Naive thymus-derived CD4-positive, alpha-beta T cell (primary cell): ENCODE measurements at regions of chr13 and their contacts with region 1.

Region 1: GRCh38 chr13:21297914-21298831 is 121.7 kb downstream of the MRPL57 start:
- DNase-seq: peak; percentile 79 to 91 (median 85)
- ATAC-seq: peak; percentile 100
- H3K4me3 ChIP-seq: peak overlapping the region; percentile 90
- H3K4me3 Mint-ChIP-seq: peak overlapping the region; percentile 78 to 95 (median 86)
- H3K27ac ChIP-seq: peak overlapping the region; percentile 44
- H3K27ac Mint-ChIP-seq: peak overlapping the region; percentile 58 to 90 (median 72)
- H3K4me1 ChIP-seq: peaks cover 11 to 15% of the 10 kb centered on the region in 2 donors
- H3K4me1 Mint-ChIP-seq: peaks cover 11 to 25% (median 22%) of the 10 kb centered on the region in 7 donors
- H3K27me3 ChIP-seq: no peaks in the 10 kb centered on the region
- H3K27me3 Mint-ChIP-seq: no peaks in the 10 kb centered on the region

Region 2: DNA sequence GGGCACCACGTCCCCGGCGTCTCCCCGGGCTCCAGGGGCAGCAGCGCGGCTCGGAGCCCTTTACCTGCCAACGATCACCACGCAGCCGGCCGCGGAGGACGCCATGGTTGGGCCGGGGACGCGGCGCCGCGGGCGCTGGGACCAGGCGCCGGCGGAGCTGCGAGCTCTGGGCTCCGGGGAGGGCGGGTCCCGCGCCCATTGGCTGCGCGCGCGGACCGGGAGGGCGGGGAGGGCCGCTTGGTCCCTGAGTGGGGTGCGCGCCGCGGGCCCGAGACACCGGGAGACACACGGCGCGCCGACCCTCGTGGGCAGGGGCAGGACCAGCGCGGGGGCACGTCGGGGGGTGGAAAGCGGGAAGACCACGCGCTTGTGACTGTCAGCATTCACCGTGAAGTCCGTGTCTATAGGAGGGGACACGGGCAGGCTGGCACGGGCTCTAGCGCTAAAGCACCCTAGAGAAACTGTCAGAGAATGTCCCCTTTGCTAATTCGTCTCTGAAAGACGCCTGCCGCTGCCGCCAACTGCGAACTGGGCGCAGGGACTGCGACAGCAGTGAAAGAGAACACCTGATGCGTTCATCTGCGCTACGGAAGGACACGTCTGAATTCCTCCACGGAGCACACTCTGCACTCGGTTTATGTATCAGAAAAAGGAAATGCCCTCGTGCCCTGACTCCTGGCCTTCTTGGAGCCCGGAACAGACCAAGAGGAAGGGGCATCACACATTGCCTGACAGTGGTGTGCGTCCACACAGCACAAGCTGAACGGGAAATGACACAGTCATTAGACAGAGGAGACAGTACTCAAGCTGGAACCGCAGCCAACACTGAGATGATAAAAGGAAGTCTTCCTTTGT is 772.3 kb before region 1 on chr13 and contains the start of gene CRYL1:
- CTCF ChIA-PET with region 1: no interaction called
- POLR2A ChIA-PET with region 1: no interaction called
- intact Hi-C with region 1: loop called in 1 of 2 experiments (anchors 1 kb)
- DNase-seq: peak; percentile 56 to 78 (median 68)
- ATAC-seq: peak; percentile 92
- H3K4me3 ChIP-seq: peak within 1 kb of the TSS; percentile 68
- H3K4me3 Mint-ChIP-seq: peak within 1 kb of the TSS; percentile 76 to 94 (median 87)
- H3K27ac ChIP-seq: peak within 1 kb of the TSS; percentile 65
- H3K27ac Mint-ChIP-seq: peak within 1 kb of the TSS; percentile 66 to 96 (median 88)
- H3K4me1 ChIP-seq: peaks cover 0 to 7% of the 10 kb centered on the region in 2 donors
- H3K4me1 Mint-ChIP-seq: peaks cover 11 to 40% (median 25%) of the 10 kb centered on the region in 7 donors
- H3K27me3 ChIP-seq: no peaks in the 10 kb centered on the region
- H3K27me3 Mint-ChIP-seq: peaks cover 0 to 9% (median 0%) of the 10 kb centered on the region in 5 donors
- total RNA-seq, gene CRYL1: 12.3 to 21.2 (median 16.3) TPM

Region 3: GRCh38 chr13:20902438-20903163 is 395.6 kb before region 1 on chr13 and contains the start of gene XPO4:
- CTCF ChIA-PET with region 1: no interaction called
- POLR2A ChIA-PET with region 1: no interaction called
- intact Hi-C with region 1: loop called in 1 of 2 experiments (anchors 2 kb)
- DNase-seq: peak; percentile 68 to 85 (median 77)
- ATAC-seq: peak; percentile 97
- H3K4me3 ChIP-seq: peak within 1 kb of the TSS; percentile 98
- H3K4me3 Mint-ChIP-seq: peak within 1 kb of the TSS; percentile 93 to 98 (median 96)
- H3K27ac ChIP-seq: peak within 1 kb of the TSS; percentile 83
- H3K27ac Mint-ChIP-seq: peak within 1 kb of the TSS; percentile 89 to 98 (median 95)
- H3K4me1 ChIP-seq: peaks cover 10 to 21% of the 10 kb centered on the region in 2 donors
- H3K4me1 Mint-ChIP-seq: peaks cover 15 to 41% (median 32%) of the 10 kb centered on the region in 7 donors
- H3K27me3 ChIP-seq: no peaks in the 10 kb centered on the region
- H3K27me3 Mint-ChIP-seq: peaks cover 0 to 3% (median 0%) of the 10 kb centered on the region in 5 donors
- total RNA-seq, gene XPO4: 20.9 to 26.5 (median 23.5) TPM

Region 4: DNA sequence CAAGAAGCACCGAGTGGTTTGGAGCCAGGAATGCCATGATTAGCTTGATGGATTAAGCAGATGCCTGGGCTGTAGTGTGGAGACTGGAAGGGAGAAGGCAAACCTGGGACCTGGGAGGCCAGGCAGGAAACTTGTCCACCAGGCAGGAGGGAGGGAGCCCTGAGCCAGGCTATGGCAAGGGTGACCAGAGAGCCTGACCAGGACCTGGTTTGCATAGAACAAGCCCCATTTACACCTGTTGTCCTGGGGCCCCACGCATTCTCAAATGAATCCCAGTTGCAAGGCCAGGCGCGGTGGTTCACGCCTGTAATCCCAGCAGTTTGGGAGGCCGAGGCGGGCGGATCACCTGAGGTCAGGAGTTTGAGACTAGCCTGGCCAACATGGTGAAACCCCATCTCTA is 186.6 kb before region 1 on chr13:
- CTCF ChIA-PET with region 1: interaction called, 4 read pairs
- POLR2A ChIA-PET with region 1: no interaction called
- intact Hi-C with region 1: loop called (anchors 1 to 2 kb)
- DNase-seq: no peak
- ATAC-seq: no peak
- H3K4me3 ChIP-seq: no peak overlapping the region
- H3K4me3 Mint-ChIP-seq: no peak overlapping the region
- H3K27ac ChIP-seq: no peak overlapping the region
- H3K27ac Mint-ChIP-seq: no peak overlapping the region
- H3K4me1 ChIP-seq: no peaks in the 10 kb centered on the region
- H3K4me1 Mint-ChIP-seq: peaks cover 0 to 2% (median 0%) of the 10 kb centered on the region in 7 donors
- H3K27me3 ChIP-seq: no peaks in the 10 kb centered on the region
- H3K27me3 Mint-ChIP-seq: no peaks in the 10 kb centered on the region

Region 5: GRCh38 chr13:21344662-21345176 is 46.5 kb after region 1 on chr13:
- CTCF ChIA-PET with region 1: interaction called, 9 read pairs
- POLR2A ChIA-PET with region 1: interaction called, 4 read pairs
- intact Hi-C with region 1: loop called (anchors 1 kb)
- DNase-seq: peak in 7 of 9 donors; percentile 27 to 56 (median 47)
- ATAC-seq: peak; percentile 78
- H3K4me3 ChIP-seq: peak overlapping the region; percentile 45
- H3K4me3 Mint-ChIP-seq: peak overlapping the region; percentile 53 to 80 (median 76)
- H3K27ac ChIP-seq: peak overlapping the region; percentile 54
- H3K27ac Mint-ChIP-seq: peak overlapping the region; percentile 78 to 95 (median 89)
- H3K4me1 ChIP-seq: peaks cover 14 to 28% of the 10 kb centered on the region in 2 donors
- H3K4me1 Mint-ChIP-seq: peaks cover 14 to 42% (median 34%) of the 10 kb centered on the region in 7 donors
- H3K27me3 ChIP-seq: no peaks in the 10 kb centered on the region
- H3K27me3 Mint-ChIP-seq: no peaks in the 10 kb centered on the region

Region 6: DNA sequence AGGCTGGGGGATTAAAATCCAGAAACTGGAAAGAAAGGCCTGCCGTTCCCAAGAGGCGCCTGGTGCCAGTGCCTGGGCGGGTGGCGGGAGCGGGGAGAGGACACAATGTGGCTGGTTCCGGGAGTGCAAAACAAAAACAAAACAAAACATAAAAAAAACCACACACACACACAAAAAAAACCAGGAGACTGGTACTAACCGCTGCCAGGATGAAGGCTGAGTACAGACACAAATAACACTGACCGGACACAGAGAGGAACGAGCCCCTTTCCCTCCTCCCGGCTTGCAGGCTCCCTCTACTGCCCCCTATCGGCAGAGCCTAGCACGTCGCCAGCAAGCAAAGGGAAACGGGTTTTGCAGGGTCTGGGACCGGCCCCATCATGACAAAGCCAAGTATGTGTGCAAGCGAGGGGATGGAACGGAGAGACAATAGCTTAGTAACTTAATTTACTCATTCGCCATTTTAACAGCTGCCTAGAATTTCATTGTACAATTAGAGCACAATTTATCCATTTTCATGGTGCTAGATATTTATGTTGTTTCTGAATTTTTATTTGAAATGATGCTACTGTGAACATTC is 178.8 kb after region 1 on chr13:
- CTCF ChIA-PET with region 1: interaction called, 71 read pairs
- POLR2A ChIA-PET with region 1: interaction called, 6 read pairs
- intact Hi-C with region 1: loop called (anchors 1 kb)
- DNase-seq: peak; percentile 59 to 82 (median 65)
- ATAC-seq: peak; percentile 94
- H3K4me3 ChIP-seq: peak overlapping the region; percentile 50
- H3K4me3 Mint-ChIP-seq: peak overlapping the region; percentile 74 to 87 (median 82)
- H3K27ac ChIP-seq: peak overlapping the region; percentile 24
- H3K27ac Mint-ChIP-seq: peak overlapping the region in 8 of 9 donors; percentile 22 to 86 (median 58)
- H3K4me1 ChIP-seq: no peaks in the 10 kb centered on the region
- H3K4me1 Mint-ChIP-seq: peaks cover 7 to 17% (median 11%) of the 10 kb centered on the region in 7 donors
- H3K27me3 ChIP-seq: no peaks in the 10 kb centered on the region
- H3K27me3 Mint-ChIP-seq: peaks cover 0 to 5% (median 0%) of the 10 kb centered on the region in 5 donors